Lower lobe of right lung (tissue), 2 donors: ENCODE measurements at regions of chr6 and their contacts with region 1.

Region 1: DNA sequence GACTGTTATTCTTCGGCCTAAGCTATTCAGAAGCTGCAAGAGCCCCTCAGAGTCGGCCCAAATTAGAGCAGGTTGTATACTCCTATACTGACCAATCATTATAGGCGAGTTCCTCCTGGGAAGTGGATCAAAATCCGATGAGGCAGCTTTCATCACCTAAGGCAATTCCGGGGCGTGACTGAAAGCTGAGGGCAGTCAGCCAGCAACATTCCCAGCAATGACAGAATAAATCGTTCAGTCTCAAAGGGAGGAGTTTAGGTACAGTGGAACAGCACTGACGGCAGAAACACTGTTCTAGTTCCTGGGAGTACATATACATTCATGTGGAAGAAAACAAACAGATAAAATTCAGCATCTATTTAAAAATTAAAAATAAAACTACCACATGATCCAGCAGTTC is 10.8 kb downstream of the HLA-DQB2 start:
- DNase-seq: no peak
- ATAC-seq: peak; percentile 56 to 72
- H3K4me3 ChIP-seq: no peak overlapping the region
- H3K27ac ChIP-seq: no peak overlapping the region
- H3K4me1 ChIP-seq: no peaks in the 10 kb centered on the region
- H3K27me3 ChIP-seq: peaks cover 6% of the 10 kb centered on the region
- CTCF ChIP-seq: no peak

Region 2: GRCh38 chr6:32317541-32317940 is 435.0 kb before region 1 on chr6:
- intact Hi-C with region 1: no loop called
- DNase-seq: no peak
- ATAC-seq: no peak
- H3K4me3 ChIP-seq: no peak overlapping the region
- H3K27ac ChIP-seq: no peak overlapping the region
- H3K4me1 ChIP-seq: no peaks in the 10 kb centered on the region
- H3K27me3 ChIP-seq: no peaks in the 10 kb centered on the region
- CTCF ChIP-seq: no peak

Region 3: DNA sequence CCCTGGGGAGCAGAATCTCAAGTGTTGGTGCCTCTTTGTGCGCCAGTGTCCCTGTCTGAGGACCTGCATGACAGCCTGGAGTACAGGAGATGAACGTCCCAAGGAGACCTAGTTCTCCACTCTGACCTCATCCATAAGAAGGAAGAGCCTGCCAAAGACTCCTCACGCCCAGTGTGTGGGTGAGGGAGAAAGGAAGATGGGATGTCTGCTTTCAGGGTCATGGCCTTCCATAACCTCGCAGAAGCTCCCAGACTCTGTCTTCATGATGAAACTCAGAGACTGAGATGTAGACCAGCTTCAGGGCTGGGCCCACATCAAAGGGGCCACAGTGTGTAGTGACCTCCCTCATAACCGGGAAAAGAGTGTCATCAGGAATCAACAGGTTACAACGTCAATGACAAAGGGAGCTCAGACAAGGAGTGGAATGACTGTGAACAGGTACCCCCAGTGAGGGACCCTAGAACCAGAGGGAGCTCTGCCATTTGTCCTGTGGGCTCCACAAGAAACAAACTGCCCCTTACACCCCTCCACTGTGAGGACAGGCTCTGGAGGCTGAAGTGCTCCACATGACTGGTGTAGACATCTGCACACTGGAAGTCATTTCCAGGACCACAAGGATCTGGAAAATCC is 94.2 kb before region 1 on chr6:
- intact Hi-C with region 1: loop called (anchors 5 kb)
- DNase-seq: peak; percentile 37
- ATAC-seq: peak; percentile 45 to 64
- H3K4me3 ChIP-seq: no peak overlapping the region
- H3K27ac ChIP-seq: no peak overlapping the region
- H3K4me1 ChIP-seq: no peaks in the 10 kb centered on the region
- H3K27me3 ChIP-seq: no peaks in the 10 kb centered on the region
- CTCF ChIP-seq: no peak

Region 4: DNA sequence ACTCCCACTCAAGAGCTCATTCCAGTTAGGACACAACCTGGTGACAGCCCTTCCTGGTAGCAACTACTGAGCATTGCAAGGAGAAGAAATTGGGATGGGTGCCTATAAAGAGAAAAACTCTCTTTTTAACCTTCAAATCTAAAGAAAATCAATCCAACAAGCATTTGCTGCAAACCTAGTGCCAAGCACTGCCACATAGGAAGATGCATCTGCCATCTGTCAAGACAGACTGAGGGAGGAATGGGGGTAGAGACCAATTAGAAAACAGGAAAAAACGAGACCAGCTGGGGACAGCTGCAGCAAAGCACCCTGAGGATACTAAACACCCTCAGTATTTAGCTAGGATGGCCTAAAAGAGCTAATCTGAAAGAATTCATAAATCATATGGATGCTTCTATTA is 160.4 kb after region 1 on chr6:
- intact Hi-C with region 1: no loop called
- DNase-seq: no peak
- ATAC-seq: no peak
- H3K4me3 ChIP-seq: no peak overlapping the region
- H3K27ac ChIP-seq: no peak overlapping the region
- H3K4me1 ChIP-seq: no peaks in the 10 kb centered on the region
- H3K27me3 ChIP-seq: no peaks in the 10 kb centered on the region
- CTCF ChIP-seq: no peak

Region 5: GRCh38 chr6:33069021-33069738 is 316.6 kb after region 1 on chr6:
- intact Hi-C with region 1: no loop called
- DNase-seq: no peak
- ATAC-seq: no peak
- H3K4me3 ChIP-seq: no peak overlapping the region
- H3K27ac ChIP-seq: no peak overlapping the region
- H3K4me1 ChIP-seq: peaks cover 20% of the 10 kb centered on the region
- H3K27me3 ChIP-seq: no peaks in the 10 kb centered on the region
- CTCF ChIP-seq: no peak